ENCODE measurements at regions of chr11 and their contacts with region 1.

Region 1: GRCh38 chr11:63892228-63892627 is 24.7 kb downstream of the RCOR2 start:
- DNase-seq: peak; percentile 43

Region 2: GRCh38 chr11:63635762-63636465 is 256.3 kb before region 1 on chr11:
- in situ Hi-C with region 1: no loop called
- DNase-seq: peak; percentile 74

Region 3: DNA sequence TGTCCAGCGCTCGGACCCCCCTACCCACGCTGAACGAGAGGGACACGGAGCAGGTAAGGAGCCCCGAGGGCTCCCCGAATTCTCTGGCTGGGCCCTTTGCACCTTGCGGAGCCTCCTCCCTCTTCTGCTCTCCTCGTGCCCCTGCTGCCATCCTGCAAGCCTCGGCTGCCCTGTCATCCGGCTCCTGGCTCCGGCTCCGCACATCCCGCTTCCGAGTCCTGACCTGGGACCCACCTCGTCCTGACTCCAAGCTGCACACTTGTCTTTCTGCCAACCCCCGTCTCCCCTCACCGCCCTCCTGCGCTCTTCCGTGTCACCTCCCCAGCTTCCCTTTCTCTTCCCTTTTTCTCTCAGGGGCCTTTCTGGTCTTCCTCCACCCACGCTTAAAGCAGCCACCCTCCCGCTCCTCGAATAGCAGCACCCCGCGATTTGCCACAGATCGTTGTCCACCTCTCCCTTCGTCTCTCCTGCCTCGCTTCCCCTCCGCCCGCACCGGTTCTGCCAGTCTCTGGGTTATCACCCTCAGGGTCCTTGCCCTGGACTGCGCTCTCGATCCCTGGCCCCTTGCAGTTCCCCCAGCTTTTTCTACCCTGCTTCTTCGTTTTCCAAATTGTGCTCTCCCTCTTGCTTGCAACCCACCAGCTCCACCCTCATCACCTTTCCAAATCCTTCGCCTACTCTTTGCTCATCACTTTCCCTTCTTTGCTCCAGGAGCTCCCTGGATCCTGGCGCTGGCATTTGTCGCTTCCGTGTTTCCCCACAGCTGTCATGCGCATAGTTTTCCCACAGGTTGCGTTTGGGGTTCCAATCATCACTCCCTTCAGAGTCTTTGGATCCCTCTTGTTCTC is 52.5 kb before region 1 on chr11:
- in situ Hi-C with region 1: loop called (anchors 10 kb)
- DNase-seq: peak; percentile 71

Region 4: DNA sequence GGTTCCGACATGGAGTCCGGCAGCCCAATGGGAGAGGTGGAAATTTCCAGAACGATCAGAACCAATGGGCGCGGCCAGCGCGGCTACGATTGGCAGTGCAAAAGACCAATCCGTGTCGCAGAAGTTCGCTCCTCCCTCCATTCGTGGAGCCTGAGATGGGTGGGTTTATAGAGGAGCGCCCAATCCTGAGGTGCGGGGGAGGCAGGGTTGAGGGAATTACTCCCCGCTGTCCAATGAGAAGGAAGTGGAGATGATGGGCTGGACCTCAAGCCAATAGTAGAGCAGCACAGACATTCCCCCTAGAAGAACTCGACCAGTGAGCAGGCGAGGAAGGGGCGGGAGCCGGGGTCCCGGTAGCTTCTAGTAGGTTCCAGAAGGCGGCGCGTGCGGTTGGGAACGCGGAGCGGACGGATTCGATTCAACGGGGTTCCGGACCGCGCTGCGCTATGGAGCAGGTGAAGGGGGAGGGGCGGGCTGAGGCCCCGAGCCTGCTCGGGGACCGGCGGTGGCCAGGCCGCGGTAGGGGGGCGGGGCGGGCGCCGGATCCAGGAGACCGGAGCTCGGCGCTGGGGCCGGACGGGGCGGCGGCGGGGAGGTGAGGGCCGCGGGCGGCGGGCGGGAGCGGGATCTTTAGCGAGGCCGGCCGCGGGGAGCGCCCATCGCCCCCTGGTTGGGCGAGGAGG is 293.7 kb after region 1 on chr11 and contains the start of gene STIP1:
- in situ Hi-C with region 1: no loop called
- DNase-seq: peak; percentile 100

Region 5: DNA sequence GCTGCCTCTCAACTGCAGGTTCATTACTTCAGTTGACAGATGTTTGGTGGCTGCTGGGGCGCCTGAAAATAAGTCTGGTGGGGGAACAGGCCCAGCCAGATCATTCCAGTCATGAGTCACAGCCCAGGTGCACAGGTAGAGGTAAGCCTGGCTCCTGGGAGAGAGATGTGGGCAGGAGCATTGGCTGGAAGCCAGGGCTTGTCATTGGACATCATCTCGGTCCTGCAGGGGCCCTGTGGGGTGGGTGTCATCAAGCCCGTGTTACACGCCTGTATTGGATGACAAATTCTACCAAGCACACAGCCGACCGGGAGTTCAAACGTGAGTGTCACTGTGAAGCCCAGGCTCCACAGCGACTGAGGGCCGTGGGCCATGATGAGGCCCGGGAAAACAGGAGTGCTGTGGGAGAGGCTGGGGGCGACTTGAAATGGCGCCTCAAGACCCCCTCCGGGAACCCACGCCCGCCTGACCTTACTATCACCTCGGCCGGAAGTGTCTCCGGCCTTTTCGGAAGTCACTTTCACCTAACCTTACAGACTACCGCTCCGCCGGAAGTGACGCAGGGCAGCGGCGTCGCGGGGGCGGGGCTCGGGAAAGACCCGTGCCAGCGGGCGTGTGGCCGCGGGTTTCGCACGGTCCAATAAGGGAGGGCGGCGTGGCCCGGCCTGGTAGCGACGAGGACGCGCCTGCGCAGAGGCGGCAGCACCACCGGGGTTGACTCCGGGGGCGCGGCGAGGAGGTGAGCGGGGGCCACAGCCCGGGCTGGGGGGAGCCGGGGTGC is 348.4 kb after region 1 on chr11 and contains the start of gene FKBP2:
- in situ Hi-C with region 1: no loop called
- DNase-seq: peak; percentile 95

Measured in KBM-7 (cell line).